PC-9 (cell line): ENCODE measurements at regions of chr1 and their contacts with region 1.

Region 1: GRCh38 chr1:217495249-217495648 is 135.6 kb downstream of the GPATCH2 start:
- DNase-seq: no peak
- H3K4me3 ChIP-seq: no peak overlapping the region
- H3K27ac ChIP-seq: no peak overlapping the region
- H3K4me1 ChIP-seq: no peaks in the 10 kb centered on the region; the same call in 1 of the 2 replicates
- H3K27me3 ChIP-seq: no peaks in the 10 kb centered on the region
- CTCF ChIP-seq: no peak

Region 2: DNA sequence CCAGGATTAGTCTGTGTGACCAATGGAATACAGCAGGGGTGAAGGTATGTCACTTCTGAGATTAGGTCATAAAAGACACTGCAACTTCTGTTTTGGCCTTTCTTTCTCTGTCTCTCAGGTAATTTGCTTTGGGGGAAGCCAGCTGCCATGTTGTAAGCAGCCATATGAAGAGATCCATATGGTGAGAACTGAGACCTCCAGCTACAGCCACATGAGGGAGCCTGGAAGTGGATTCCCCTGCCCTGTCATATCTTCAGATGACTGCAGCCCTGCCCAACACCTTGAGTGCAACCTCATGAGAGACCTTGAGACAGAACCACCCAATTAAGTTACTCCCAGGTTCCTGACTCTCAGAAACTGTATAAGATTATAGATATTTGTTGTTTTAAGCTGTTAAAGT is 701.9 kb before region 1 on chr1:
- CTCF ChIA-PET with region 1: no interaction called
- POLR2A ChIA-PET with region 1: no interaction called
- intact Hi-C with region 1: no loop called
- DNase-seq: no peak
- H3K4me3 ChIP-seq: no peak overlapping the region
- H3K27ac ChIP-seq: no peak overlapping the region
- H3K4me1 ChIP-seq: no peaks in the 10 kb centered on the region
- H3K27me3 ChIP-seq: no peaks in the 10 kb centered on the region
- CTCF ChIP-seq: no peak

Region 3: GRCh38 chr1:217462666-217463065 is 32.6 kb before region 1 on chr1:
- CTCF ChIA-PET with region 1: no interaction called
- POLR2A ChIA-PET with region 1: interaction called, 11 read pairs
- intact Hi-C with region 1: no loop called
- DNase-seq: no peak
- H3K4me3 ChIP-seq: no peak overlapping the region
- H3K27ac ChIP-seq: no peak overlapping the region
- H3K4me1 ChIP-seq: no peaks in the 10 kb centered on the region
- H3K27me3 ChIP-seq: no peaks in the 10 kb centered on the region
- CTCF ChIP-seq: no peak

Region 4: DNA sequence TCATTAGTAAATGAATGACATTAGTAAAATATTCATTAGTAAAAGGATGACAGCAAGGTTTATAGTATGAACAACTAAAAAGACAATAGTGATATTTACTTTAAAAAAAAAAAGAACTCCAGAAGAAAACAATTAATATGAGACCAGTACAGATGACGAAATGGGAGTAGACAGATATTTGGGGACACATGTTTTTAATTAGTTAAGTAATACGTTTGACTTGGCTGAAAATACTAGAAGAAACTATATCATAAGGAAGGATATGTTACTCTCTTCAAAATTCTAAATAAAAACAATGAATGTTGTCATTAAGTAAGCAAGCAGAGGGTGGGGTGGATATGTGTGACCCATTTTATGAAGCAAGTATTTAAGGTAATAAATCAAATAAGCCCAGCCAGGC is 73.8 kb after region 1 on chr1:
- CTCF ChIA-PET with region 1: no interaction called
- POLR2A ChIA-PET with region 1: interaction called, 13 read pairs
- intact Hi-C with region 1: no loop called
- DNase-seq: no peak
- H3K4me3 ChIP-seq: no peak overlapping the region
- H3K27ac ChIP-seq: no peak overlapping the region
- H3K4me1 ChIP-seq: no peaks in the 10 kb centered on the region
- H3K27me3 ChIP-seq: no peaks in the 10 kb centered on the region
- CTCF ChIP-seq: no peak